ENCODE measurements at regions of chr5 and their contacts with region 1.

Region 1: DNA sequence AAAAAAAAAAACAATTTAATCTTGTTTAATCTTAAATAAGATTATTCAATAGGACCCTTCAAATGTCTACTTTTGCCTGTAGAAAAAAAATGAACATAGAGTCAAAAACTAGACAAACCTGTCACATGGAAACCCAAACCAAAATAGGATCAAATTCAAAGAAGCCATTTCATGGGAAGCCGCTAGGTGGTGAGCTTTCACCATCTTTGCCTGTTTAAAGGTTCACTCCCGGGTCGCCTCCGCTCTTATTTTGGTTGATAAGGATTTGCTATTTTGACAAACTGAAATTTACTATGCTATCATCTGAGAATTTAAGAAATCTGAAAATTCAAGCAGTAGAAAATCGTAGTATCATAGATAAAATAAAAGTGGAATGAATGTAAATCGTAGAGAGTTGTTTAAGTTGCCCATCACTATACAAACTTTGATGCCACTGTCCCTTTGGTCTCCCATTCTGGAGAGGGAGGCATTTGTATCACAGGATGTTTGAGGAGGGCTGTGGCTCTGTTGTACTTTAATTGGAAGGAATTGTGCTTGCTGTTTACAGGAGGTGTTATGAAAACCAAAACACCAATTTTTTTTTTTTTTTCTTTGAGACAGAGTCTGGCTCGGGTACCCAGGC is 43.5 kb upstream of the DNAH5 start:
- DNase-seq: peak; percentile 95
- ATAC-seq: peak; percentile 41
- H3K4me3 ChIP-seq: no peak overlapping the region
- H3K27ac ChIP-seq: peak overlapping the region; percentile 55
- H3K4me1 ChIP-seq: peaks cover 35% of the 10 kb centered on the region
- H3K27me3 ChIP-seq: no peaks in the 10 kb centered on the region
- CTCF ChIP-seq: peak; percentile 98

Region 2: DNA sequence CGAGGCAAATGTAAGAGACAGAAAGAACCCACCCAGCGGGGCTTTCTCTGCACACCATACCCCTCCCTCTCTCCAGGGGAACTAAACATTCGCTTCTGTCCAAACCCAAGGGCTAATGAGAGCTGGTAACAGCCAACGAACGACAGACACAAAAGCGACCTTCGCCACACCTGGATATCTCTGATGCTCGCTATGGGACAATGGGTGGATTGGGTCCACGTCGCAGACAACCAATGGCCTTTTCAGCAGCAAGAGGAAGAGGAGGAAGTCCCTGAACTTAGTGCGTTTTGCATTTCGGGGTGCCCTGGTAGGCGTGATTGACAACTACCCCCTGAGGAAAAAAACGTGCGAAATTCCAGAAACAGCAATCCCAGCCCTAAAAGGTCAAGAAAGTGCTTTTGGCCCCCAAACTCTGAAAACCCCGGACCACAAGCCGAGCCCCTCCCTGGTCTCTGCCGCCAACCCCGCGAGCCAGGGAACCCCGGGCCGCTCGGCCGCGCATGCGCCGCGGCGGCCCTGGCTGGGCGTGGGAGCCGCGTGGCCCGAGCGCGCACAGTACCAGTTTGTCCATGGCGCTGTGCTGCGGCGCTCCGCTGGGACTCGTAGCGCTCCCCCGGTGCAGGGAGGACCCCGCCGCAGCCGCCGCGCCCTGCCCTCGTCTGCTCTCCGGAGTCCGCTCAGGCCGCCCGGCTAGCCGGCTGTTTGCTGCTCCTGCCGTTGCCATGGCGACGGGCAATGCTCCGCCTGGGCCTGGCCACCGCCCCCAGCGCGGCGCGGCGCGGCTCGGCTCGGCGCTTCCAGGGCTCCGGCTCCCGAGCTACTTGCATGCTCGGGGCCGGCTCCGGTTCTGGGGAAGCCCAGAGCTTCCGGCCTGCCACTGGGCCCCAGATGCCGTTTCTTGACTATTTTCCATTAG is 23.4 kb after region 1 on chr5:
- CTCF ChIA-PET with region 1: no interaction called
- POLR2A ChIA-PET with region 1: interaction called, 3 read pairs
- intact Hi-C with region 1: loop called (anchors 1 kb)
- DNase-seq: peak; percentile 95
- ATAC-seq: peak; percentile 72
- H3K4me3 ChIP-seq: peak overlapping the region; percentile 75
- H3K27ac ChIP-seq: peak overlapping the region; percentile 96
- H3K4me1 ChIP-seq: peaks cover 39% of the 10 kb centered on the region
- H3K27me3 ChIP-seq: no peaks in the 10 kb centered on the region
- CTCF ChIP-seq: no peak

Region 3: DNA sequence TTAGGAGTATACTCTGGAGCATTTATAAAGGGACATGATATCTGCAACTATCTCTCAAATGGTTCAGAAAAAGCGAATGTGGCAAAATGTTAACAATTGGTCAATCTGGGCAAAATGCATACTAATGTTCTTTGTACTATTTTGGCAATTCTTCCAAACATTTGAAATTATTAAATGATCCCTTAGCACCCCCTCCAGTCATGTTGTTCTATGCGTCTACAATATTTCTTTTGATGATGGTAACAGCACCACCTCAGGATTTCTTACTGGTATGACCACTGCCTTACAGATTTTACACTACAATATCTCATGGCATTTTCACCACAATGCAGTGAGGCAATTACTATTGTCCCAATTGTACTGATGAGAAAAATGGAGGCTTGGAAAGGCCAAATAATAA is 102.3 kb after region 1 on chr5:
- CTCF ChIA-PET with region 1: no interaction called
- POLR2A ChIA-PET with region 1: no interaction called
- intact Hi-C with region 1: loop called (anchors 5 kb)
- DNase-seq: no peak
- ATAC-seq: 0 out of 2 replicates have a peak, but pooled peaks have one; percentile 20
- H3K4me3 ChIP-seq: no peak overlapping the region
- H3K27ac ChIP-seq: no peak overlapping the region
- H3K4me1 ChIP-seq: no peaks in the 10 kb centered on the region
- H3K27me3 ChIP-seq: no peaks in the 10 kb centered on the region
- CTCF ChIP-seq: peak; percentile 23; the same call in 1 of the 2 replicates

Measured in PC-3 (cell line).